ENCODE measurements at regions of chr17 and their contacts with region 1.

Region 1: GRCh38 chr17:42394838-42395237 is 6.6 kb upstream of the STAT3 start:
- DNase-seq: no peak
- H3K4me3 ChIP-seq: no peak overlapping the region
- H3K27ac ChIP-seq: no peak overlapping the region
- H3K4me1 ChIP-seq: no peaks in the 10 kb centered on the region
- H3K27me3 ChIP-seq: no peaks in the 10 kb centered on the region
- CTCF ChIP-seq: no peak

Region 2: DNA sequence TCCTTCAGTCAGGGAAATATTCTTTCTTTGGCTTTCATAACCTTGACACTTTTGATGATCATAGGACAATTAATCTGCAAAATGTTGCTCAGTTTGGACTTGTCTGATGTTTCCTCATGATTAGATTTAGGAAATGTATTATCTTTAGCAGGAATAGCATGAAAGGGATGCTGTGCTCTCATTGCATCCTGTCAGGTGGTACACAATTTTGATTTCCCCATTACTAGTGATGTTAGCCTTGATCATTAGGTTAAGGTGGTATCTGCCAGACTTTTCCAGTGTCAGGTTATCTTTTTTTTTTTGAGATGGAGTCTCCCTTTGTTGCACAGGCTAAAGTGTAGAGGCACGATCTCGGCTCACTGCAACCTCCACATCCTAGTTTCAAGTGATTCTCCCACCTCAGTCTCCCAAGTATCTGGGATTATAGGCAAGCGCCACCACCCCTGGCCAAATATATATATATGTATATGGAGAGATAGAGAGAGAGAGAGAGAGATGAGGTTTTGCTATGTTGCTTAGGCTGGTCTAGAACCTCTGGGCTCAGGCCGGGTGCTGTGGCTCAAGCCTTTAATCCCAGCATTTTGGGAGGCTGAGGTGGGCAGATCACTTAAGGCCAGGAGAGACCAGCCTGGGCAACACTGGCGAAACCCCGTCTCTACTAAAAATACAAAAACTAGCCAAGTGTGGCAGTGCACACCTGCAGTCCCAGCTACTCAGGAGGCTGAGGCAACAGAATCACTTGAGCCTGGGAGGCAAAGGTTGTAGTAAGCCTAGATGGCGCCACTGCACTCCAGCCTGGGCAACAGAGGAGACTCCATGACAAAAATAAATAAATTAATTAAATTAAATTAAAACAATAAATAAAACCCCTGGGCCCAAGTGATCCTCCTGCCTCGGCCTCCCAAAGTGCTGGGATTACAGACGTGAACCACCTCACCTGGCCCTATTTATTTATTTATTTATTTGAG is 44.0 kb after region 1 on chr17:
- CTCF ChIA-PET with region 1: interaction called, 4 read pairs
- POLR2A ChIA-PET with region 1: interaction called, 13 read pairs
- intact Hi-C with region 1: no loop called
- DNase-seq: no peak
- H3K4me3 ChIP-seq: no peak overlapping the region
- H3K27ac ChIP-seq: no peak overlapping the region
- H3K4me1 ChIP-seq: no peaks in the 10 kb centered on the region
- H3K27me3 ChIP-seq: no peaks in the 10 kb centered on the region
- CTCF ChIP-seq: peak; percentile 48

Region 3: GRCh38 chr17:42527273-42527703 is 132.4 kb after region 1 on chr17:
- CTCF ChIA-PET with region 1: no interaction called
- POLR2A ChIA-PET with region 1: no interaction called
- intact Hi-C with region 1: no loop called
- DNase-seq: peak; percentile 75
- H3K4me3 ChIP-seq: no peak overlapping the region
- H3K27ac ChIP-seq: no peak overlapping the region
- H3K4me1 ChIP-seq: no peaks in the 10 kb centered on the region
- H3K27me3 ChIP-seq: no peaks in the 10 kb centered on the region
- CTCF ChIP-seq: peak; percentile 65